ENCODE measurements at regions of chr1 and their contacts with region 1.

Region 1: DNA sequence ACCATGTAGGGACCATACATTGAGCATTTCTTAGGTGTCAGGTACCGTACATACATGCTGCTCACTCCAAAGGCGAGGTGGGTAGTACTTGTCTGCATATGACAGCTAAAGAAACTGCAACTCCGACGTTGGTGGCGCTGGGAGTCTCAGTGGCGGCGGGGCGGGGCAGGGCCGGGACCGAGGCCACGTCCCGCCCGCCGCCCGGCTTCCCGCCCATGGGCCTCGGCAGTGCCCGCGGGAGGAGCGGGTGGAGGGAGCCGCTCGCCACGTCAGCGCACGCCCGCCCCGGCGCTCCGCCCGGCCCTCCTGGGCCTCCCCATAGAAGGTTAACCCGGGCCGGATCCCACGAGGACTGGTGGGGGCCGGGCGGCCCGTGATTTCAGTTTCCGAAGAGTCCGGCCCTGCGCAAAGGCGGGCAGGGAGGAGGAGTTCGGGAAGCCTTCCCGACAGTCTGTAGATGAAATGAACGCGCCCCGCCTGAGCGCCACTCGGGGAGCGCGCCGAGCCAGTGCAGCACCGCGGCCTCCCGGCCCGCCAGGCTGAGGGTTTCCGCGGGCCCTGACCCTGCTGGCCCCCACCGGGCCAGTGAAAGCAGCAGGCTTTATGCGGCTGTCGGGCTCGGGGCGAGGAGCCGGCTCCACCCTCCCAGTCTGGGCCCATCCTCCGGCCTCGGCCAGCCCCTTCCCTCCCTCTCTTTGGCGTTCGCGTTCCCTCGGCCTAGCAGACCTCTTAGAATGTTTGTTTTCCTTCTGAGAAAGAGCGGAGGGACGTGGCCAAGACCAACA is 119.9 kb upstream of the JUN start:
- DNase-seq: peak; percentile 90
- H3K4me3 ChIP-seq: peak overlapping the region; percentile 38 to 49
- H3K27ac ChIP-seq: peak overlapping the region; percentile 94 to 97
- H3K4me1 ChIP-seq: no peaks in the 10 kb centered on the region
- H3K27me3 ChIP-seq: no peaks in the 10 kb centered on the region
- CTCF ChIP-seq: peak in 1 of 4 experiments; percentile 9
- POLR2A ChIP-seq: peak; percentile 87

Region 2: GRCh38 chr1:58755468-58755872 is 148.2 kb before region 1 on chr1:
- intact Hi-C with region 1: no loop called
- DNase-seq: peak; percentile 52
- H3K4me3 ChIP-seq: no peak overlapping the region
- H3K27ac ChIP-seq: no peak overlapping the region
- H3K4me1 ChIP-seq: peaks cover 8% of the 10 kb centered on the region
- H3K27me3 ChIP-seq: no peaks in the 10 kb centered on the region
- CTCF ChIP-seq: no peak
- POLR2A ChIP-seq: no peak

Region 3: GRCh38 chr1:59013276-59013927 is 109.7 kb after region 1 on chr1:
- intact Hi-C with region 1: loop called (anchors 5 kb)
- DNase-seq: peak; percentile 70
- H3K4me3 ChIP-seq: peak overlapping the region in 1 of 2 donors; percentile 10
- H3K27ac ChIP-seq: peak overlapping the region; percentile 85 to 89
- H3K4me1 ChIP-seq: peaks cover 13% of the 10 kb centered on the region
- H3K27me3 ChIP-seq: no peaks in the 10 kb centered on the region
- CTCF ChIP-seq: peak in 2 of 4 experiments; percentile 10 to 17
- POLR2A ChIP-seq: no peak